Posterior cingulate gyrus (tissue), 11 donors: ENCODE measurements at regions of chr1 and their contacts with region 1.

Region 1: GRCh38 chr1:109548321-109549267 is at the start of gene GNAI3:
- DNase-seq: peak; percentile 95 to 100 (median 98)

Region 2: GRCh38 chr1:109277434-109278204 is 271.0 kb before region 1 on chr1:
- intact Hi-C with region 1: no loop called
- DNase-seq: peak; percentile 71 to 97 (median 86)

Region 3: DNA sequence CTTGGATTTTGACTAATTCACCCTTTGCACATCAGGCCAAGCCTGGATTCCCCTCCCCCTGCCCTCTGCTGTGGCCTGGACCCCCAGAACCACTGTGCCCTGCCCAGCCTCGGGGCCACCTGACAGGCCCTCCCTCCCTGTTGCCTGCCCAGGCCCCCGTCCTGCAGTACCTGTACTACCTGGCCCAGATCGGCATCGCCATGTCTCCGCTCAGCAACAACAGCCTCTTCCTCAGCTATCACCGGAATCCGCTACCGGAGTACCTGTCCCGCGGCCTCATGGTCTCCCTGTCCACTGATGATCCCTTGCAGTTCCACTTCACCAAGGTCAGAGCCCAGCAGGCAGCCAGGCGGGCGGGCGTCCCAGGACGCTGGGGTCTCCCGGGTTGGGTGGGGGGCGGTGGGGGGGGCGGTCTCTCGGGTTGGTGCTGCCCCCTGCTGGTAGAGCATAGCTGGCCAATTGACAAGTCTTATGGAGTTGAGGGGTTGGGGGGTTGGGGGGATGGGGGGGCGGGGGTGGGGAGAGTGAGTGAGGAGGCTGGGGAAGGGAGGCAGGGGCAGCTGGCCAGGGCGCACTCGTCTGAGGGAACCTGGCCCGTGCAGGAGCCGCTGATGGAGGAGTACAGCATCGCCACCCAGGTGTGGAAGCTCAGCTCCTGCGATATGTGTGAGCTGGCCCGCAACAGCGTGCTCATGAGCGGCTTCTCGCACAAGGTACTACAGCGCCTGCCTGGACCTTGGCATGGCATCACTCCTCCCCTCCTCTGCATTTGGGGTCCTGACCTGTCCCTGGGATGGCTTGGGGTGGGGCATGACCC is 81.7 kb after region 1 on chr1:
- intact Hi-C with region 1: loop called (anchors 5 kb)
- DNase-seq: peak in 1 of 10 donors; percentile 85

Region 4: DNA sequence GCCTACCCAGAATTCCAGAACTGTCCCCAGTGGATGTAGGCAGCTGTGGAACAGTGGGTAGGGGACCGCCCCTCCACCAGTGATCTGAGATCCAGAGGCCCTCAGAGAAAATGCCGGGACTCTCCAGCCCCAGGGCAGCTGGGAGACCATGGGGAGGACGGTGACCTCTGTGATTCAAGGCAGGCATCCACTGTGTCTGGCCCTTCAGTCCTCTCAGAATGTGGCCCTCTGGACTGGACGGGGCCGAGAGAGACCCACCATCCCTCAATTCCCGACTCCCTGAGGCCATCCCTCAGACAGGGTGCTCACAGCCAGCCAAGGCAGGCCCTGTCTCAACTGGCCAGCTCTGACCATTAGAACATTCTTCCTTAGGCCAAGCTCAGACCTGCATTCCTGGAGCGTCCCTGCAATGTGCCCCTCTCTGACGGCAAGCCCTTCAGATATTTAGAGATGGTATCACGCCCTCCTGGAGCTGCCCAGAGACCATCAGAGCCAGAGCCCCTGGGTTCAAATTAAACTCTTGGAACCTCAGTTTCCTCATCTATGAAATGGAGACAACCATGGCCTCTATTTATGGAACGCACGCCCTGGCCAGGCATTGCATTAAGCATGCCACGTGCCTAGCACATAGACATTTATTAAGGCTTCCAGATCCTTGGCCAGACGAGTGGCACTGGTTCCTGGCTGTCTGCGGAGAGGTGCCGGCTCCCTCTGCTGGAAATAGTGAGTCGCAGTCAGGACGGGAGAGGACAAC is 224.7 kb after region 1 on chr1:
- intact Hi-C with region 1: loop called (anchors 1 kb)
- DNase-seq: peak; percentile 69 to 98 (median 85)